Right ventricle myocardium inferior (tissue), 1 donor: ENCODE measurements at regions of chr15 and their contacts with region 1.

Region 1: GRCh38 chr15:85380217-85380811 is at the start of gene AKAP13:
- DNase-seq: peak; percentile 99
- ATAC-seq: peak; percentile 95
- total RNA-seq, gene AKAP13: 292 TPM

Region 2: GRCh38 chr15:85154061-85154460 is 226.3 kb before region 1 on chr15:
- intact Hi-C with region 1: no loop called
- DNase-seq: no peak
- ATAC-seq: no peak

Region 3: GRCh38 chr15:85330901-85331588 is 49.3 kb before region 1 on chr15:
- intact Hi-C with region 1: loop called (anchors 2 kb)
- DNase-seq: peak; percentile 94
- ATAC-seq: peak; percentile 96

Region 4: GRCh38 chr15:85362436-85363081 is 17.8 kb before region 1 on chr15:
- intact Hi-C with region 1: loop called (anchors 2 kb)
- DNase-seq: no peak
- ATAC-seq: peak; percentile 42

Region 5: DNA sequence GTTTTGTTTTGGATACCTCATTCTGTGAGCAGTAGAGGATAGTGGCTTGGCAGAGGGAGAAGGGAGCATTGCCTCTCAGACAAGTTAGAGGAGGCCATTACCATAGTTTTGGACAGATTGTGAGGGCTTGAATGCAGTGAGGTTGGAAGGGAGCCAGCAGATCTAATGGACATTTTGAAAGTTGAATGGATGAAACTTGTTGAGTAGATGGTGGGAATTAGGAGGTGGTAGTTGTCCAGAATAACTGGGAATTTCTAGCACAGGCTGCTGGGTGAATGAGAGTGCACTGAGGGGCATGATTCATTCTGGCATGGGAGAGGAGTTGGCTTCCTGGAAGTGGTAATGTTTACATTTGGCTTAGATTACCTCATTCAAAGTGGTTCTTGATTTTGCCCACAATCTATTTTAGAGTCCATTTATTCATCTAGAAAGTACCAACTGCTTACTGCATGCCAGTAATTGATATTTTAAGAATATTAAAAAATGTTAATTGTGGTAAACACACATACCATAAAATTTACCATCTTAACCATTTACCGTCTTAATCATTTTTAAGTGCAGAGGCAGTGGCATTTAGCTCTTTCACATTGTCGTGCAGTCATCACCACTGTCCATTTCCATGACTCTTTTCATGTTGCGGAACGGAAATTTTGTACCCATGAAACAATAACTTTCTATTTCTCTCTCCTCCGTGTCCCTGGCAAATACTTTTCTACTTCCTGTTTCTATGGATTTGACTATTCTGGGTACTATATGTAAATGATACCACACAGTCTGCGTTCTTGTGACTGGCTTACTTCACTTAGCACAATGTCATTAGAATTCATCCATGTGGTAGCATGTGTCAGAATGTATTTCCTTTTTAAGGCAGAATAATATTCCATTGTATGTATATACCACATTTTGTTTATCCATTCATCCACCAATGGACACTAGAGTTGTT is 27.8 kb after region 1 on chr15:
- intact Hi-C with region 1: no loop called
- DNase-seq: no peak
- ATAC-seq: no peak

Region 6: DNA sequence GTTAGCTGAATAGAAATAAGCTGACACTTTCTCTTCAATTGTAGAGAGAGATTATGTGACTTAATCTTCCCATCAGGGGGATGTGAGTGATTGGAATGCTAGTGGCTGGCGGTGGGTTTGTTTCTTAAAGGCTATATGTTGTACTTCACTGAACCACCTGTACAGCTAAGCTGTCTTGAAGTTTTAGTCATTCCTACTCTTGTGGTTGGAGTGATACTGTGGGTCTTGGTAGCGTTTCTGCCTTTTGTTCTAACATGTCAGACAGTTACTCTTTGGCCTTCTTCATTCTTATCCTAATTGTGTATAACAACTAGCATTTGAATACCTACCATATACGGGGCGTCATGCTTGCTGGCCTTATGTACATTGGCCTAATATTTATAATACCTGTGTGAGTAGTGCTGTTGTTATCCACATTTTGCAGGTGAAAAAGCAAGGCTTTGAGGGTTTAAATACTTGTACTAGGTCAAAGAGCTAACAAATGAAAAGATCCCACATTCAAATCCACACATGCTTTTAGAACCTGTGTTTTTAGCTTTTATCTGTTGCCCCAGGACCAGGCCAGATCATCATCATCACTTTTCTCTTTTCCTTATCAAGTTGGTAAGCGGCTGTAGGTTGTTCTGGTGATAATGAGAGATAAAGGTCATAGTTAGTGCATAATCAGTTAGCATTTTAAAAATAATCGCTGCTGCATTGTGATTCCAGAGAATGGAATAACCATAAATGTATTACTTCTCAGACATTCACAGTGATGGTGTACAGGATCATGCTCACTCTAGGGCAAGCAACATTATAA is 50.3 kb after region 1 on chr15:
- intact Hi-C with region 1: loop called (anchors 5 kb)
- DNase-seq: no peak
- ATAC-seq: no peak

Region 7: DNA sequence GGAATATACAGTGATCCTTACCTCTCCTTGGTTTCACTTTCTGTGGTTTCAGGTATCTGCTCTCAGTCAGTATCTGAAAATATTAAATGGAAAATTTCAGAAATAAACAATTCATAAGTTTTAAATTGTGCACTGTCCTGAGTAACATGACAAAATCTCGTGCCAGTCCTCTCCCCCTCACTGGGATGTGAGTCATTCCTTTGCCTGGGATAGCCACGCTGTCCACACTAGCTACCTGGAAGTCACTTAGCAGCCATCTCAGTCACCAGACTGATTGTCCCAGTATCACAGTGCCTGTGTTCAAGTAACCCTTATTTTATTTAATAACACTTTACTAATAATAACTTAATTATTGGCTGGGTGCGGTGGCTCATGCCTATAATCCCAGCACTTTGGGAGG is 429.8 kb after region 1 on chr15:
- intact Hi-C with region 1: no loop called
- DNase-seq: no peak
- ATAC-seq: no peak